Mammary epithelial cell (primary cell): ENCODE measurements at regions of chr3 and their contacts with region 1.

Region 1: GRCh38 chr3:74630602-74631001 is 16.1 kb upstream of the CNTN3 start:
- DNase-seq: peak; percentile 46
- H3K4me3 ChIP-seq: no peak overlapping the region
- H3K27ac ChIP-seq: no peak overlapping the region
- H3K4me1 ChIP-seq: peaks cover 6% of the 10 kb centered on the region
- H3K27me3 ChIP-seq: no peaks in the 10 kb centered on the region
- CTCF ChIP-seq: peak; percentile 27 to 57

Region 2: GRCh38 chr3:74592359-74592758 is 38.2 kb before region 1 on chr3:
- CTCF ChIA-PET with region 1: no interaction called
- dilution Hi-C with region 1: no loop called
- in situ Hi-C with region 1: no loop called
- intact Hi-C with region 1: no loop called
- DNase-seq: no peak
- H3K4me3 ChIP-seq: no peak overlapping the region
- H3K27ac ChIP-seq: no peak overlapping the region
- H3K4me1 ChIP-seq: no peaks in the 10 kb centered on the region
- H3K27me3 ChIP-seq: no peaks in the 10 kb centered on the region
- CTCF ChIP-seq: no peak

Region 3: DNA sequence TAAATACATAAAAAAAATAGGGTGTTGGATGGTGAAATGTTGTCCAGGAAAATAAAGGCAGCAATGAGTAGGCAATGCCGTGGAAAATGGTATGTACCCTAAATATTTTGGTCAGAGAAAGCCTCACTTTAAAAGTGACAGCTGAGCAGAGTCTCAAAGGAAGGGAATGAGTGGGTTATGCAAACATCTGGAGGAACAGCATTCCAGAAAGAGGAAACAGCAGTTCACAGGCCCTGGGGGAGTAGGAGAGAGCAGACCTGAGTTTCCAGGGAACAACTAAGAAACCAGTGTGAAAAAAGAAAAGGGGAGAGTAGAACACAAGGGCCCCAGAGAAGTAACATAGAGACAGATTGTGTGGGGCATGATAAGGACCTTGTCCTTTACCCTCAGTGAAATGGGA is 213.8 kb after region 1 on chr3:
- CTCF ChIA-PET with region 1: no interaction called
- dilution Hi-C with region 1: no loop called
- in situ Hi-C with region 1: no loop called
- intact Hi-C with region 1: loop called (anchors 10 kb)
- DNase-seq: peak; percentile 60
- H3K4me3 ChIP-seq: no peak overlapping the region
- H3K27ac ChIP-seq: peak overlapping the region; percentile 67
- H3K4me1 ChIP-seq: peaks cover 18% of the 10 kb centered on the region
- H3K27me3 ChIP-seq: no peaks in the 10 kb centered on the region
- CTCF ChIP-seq: no peak

Region 4: DNA sequence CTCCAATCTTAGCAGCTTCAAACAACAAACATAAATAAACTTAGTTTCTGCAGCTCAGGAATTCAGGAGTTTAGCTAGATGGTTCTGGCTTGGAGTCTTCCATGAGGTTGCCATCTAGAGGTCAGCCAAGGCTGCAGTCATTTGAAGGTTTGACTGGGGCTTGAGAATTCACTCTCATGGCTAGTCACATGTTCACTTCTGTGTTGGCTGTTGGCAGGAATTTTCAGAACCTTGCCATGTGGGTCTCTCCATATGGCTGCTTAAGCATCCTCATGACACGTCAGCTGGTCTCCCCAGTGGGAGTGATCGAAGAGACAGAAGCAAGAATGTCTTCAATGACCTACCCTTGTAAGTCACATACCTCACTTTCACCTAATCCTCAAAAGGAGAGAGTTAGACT is 253.1 kb after region 1 on chr3:
- CTCF ChIA-PET with region 1: no interaction called
- dilution Hi-C with region 1: no loop called
- in situ Hi-C with region 1: no loop called
- intact Hi-C with region 1: loop called (anchors 5 kb)
- DNase-seq: peak; percentile 31
- H3K4me3 ChIP-seq: no peak overlapping the region
- H3K27ac ChIP-seq: no peak overlapping the region
- H3K4me1 ChIP-seq: no peaks in the 10 kb centered on the region
- H3K27me3 ChIP-seq: no peaks in the 10 kb centered on the region
- CTCF ChIP-seq: peak; percentile 64 to 80

Region 5: GRCh38 chr3:75110741-75111140 is 480.1 kb after region 1 on chr3:
- CTCF ChIA-PET with region 1: no interaction called
- dilution Hi-C with region 1: no loop called
- in situ Hi-C with region 1: no loop called
- intact Hi-C with region 1: no loop called
- DNase-seq: no peak
- H3K4me3 ChIP-seq: no peak overlapping the region
- H3K27ac ChIP-seq: no peak overlapping the region
- H3K4me1 ChIP-seq: no peaks in the 10 kb centered on the region
- H3K27me3 ChIP-seq: peaks cover 2% of the 10 kb centered on the region
- CTCF ChIP-seq: no peak